WTC11 (cell line): ENCODE measurements at regions of chr2 and their contacts with region 1.

Region 1: GRCh38 chr2:9630749-9631483 is at the start of gene YWHAQ:
- DNase-seq: peak; percentile 98
- ATAC-seq: peak; percentile 93
- H3K4me3 Mint-ChIP-seq: peak within 1 kb of the TSS; percentile 98
- H3K27ac Mint-ChIP-seq: peak within 1 kb of the TSS; percentile 99
- H3K4me1 Mint-ChIP-seq: peaks cover 44% of the 10 kb centered on the region
- H3K27me3 Mint-ChIP-seq: peaks cover 30% of the 10 kb centered on the region
- CTCF ChIP-seq: no peak
- total RNA-seq, gene YWHAQ: 394 to 395 TPM (median 395 TPM) in 3 replicates

Region 2: DNA sequence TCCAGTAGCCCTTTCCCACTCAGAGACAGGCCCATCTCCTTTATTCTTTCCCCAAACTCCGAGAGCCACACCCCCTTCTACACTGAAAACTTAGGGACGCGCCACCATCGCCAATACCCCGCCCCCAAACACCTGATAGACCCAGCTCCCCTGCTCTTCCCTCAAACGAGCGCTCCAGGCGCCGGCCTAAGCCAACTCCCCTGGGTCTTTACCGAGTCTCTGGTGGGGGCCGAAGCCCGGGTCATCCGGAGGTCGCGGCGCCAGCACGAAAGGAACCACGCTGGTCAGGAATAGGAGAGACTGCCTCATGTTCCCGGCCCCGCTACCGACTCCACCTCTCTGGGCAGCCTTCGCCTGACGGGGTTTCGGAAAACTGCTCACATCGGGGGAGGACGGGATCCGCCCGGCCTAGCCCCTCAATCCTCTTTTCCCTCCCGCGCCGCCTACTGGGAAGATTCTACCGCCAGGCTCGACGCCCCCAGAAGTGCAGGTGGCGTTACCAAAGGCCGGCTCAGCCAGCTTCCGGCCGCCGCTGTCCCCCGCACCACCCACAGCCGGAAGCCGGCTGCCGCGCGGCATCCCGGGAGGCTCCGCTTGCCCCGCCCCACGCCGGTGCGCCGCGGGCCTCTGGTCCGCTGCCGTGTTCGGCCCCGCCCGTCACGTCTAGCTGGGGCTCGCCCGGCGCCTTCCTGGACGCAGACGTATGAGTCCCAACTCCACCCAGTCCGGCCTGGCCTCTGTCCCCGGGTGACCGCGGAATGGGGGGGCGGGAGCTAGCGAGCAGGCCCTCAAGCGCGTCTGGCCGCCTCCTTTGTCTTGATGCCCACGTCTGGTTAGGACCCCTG is 75.4 kb before region 1 on chr2 and contains the start of gene ADAM17:
- CTCF ChIA-PET with region 1: interaction called, 16 read pairs
- POLR2A ChIA-PET with region 1: interaction called, 46 read pairs
- DNase-seq: peak; percentile 92
- ATAC-seq: peak; percentile 94
- H3K4me3 Mint-ChIP-seq: peak within 1 kb of the TSS; percentile 96
- H3K27ac Mint-ChIP-seq: peak within 1 kb of the TSS; percentile 97
- H3K4me1 Mint-ChIP-seq: peaks cover 30% of the 10 kb centered on the region
- H3K27me3 Mint-ChIP-seq: no peaks in the 10 kb centered on the region
- CTCF ChIP-seq: no peak
- total RNA-seq, gene ADAM17: 23.5 to 25.9 TPM (median 25.5 TPM) in 3 replicates

Region 3: GRCh38 chr2:9618410-9618809 is 12.5 kb before region 1 on chr2:
- CTCF ChIA-PET with region 1: interaction called, 4 read pairs
- POLR2A ChIA-PET with region 1: interaction called, 10 read pairs
- DNase-seq: no peak
- ATAC-seq: no peak
- H3K4me3 Mint-ChIP-seq: no peak overlapping the region
- H3K27ac Mint-ChIP-seq: no peak overlapping the region
- H3K4me1 Mint-ChIP-seq: peaks cover 42% of the 10 kb centered on the region
- H3K27me3 Mint-ChIP-seq: no peaks in the 10 kb centered on the region
- CTCF ChIP-seq: no peak